ENCODE measurements at regions of chr6 and their contacts with region 1.

Region 1: DNA sequence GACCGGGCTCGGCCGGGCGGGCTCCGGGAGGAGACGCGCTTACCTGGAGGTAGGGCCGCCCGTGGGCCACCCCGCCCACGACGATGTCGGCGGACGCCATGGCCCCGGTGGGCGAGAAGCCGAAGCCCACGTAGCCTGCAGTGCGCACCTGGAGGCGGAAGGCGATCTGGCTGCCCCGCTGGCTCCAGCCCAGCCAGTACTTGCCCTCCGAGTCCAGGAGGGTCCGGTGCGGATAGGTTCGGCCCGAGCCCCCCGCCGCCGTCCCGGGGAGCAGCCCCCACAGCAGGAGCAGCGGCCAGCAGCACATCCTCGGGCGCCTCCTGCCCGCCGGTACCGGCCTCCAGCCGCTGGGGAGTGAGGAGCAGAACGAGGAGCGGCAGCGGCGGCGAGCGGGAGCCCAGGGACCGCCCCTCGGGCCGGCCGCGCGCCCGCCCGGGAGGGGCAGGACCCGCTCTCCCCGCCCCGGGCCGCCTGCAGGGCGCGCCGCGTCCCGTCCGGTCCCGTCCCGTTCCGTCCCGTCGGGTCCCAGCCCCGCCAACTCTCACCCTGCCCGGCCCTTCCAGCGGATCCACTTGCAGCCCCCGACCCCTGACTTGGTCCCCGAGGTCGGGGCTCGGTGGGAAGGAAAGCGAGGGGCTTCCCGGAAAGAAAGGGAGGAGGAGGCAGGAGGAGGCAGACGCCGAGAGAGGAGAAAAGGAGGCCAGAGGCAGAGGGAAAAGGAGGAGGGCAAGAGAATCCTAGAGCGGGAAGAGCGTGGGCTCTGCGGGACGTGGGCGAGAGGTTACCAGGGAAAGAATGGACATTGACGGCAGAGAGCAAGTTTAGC is at the start of gene MOXD1:
- DNase-seq: no peak
- ATAC-seq: peak; percentile 96
- H3K4me3 ChIP-seq: peak within 1 kb of the TSS; percentile 60 to 74 (median 62)
- H3K27ac ChIP-seq: no peak within 1 kb of the TSS
- H3K4me1 ChIP-seq: peaks cover 12% of the 10 kb centered on the region
- H3K27me3 ChIP-seq: peaks cover 14 to 38% of the 10 kb centered on the region in 2 experiments
- CTCF ChIP-seq: no peak; the same call in 1 of the 2 replicates
- EP300 ChIP-seq: no peak
- POLR2A ChIP-seq: no peak
- RAD21 ChIP-seq: no peak
- total RNA-seq, gene MOXD1: not detected in 2 replicates

Region 2: GRCh38 chr6:132430110-132430509 is 28.8 kb after region 1 on chr6:
- CTCF ChIA-PET with region 1: no interaction called
- POLR2A ChIA-PET with region 1: no interaction called
- in situ Hi-C with region 1: no loop called
- intact Hi-C with region 1: no loop called
- DNase-seq: no peak
- ATAC-seq: no peak
- H3K4me3 ChIP-seq: no peak overlapping the region
- H3K27ac ChIP-seq: no peak overlapping the region
- H3K4me1 ChIP-seq: no peaks in the 10 kb centered on the region
- H3K27me3 ChIP-seq: no peaks in the 10 kb centered on the region
- CTCF ChIP-seq: no peak
- EP300 ChIP-seq: no peak
- POLR2A ChIP-seq: no peak
- RAD21 ChIP-seq: no peak

Region 3: DNA sequence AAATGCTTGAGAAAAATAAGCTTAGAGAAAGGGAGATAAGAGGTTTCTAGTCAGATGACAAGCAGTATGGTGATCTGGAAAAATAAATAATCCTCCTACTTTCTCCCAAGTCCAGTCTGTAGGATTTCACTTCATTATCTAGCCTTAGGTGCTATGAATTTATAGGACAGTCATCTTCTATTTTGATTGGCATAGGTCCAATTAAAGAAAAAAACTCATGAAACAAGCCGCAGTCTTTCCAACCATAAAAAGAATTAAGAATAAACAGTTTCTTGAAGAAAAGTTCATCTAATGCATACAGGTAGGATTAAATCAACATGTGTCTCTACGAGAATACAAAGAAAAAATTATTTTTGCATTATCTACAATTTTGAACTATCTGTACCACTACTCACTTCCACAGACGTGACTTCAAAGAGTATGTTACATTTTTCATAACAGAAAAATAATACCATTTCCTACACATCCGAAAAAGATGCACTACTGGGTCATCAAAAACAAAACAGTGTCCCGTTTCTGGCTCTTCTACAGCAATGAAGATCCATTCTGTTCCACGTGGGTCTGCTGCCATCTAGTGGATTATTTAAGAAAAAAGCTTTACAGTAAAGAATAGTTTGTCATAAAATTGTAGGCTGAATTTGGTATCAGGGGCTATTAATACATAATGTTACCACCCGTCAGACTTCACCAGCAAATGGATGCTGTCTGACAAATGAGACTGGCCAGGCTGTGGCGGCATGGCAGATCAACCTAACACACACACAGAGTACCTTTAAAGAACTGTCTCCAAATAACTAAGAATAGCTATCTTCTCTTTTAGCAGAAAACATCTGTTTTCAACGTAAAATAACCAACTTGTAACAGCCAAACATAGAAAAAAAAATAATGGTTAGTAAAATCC is 82.7 kb after region 1 on chr6:
- CTCF ChIA-PET with region 1: no interaction called
- POLR2A ChIA-PET with region 1: no interaction called
- in situ Hi-C with region 1: no loop called
- intact Hi-C with region 1: loop called (anchors 5 kb)
- DNase-seq: peak; percentile 75
- ATAC-seq: peak; percentile 88
- H3K4me3 ChIP-seq: no peak overlapping the region
- H3K27ac ChIP-seq: no peak overlapping the region
- H3K4me1 ChIP-seq: no peaks in the 10 kb centered on the region
- H3K27me3 ChIP-seq: no peaks in the 10 kb centered on the region
- CTCF ChIP-seq: peak; percentile 83
- EP300 ChIP-seq: no peak
- POLR2A ChIP-seq: no peak
- RAD21 ChIP-seq: peak; percentile 85

Region 4: DNA sequence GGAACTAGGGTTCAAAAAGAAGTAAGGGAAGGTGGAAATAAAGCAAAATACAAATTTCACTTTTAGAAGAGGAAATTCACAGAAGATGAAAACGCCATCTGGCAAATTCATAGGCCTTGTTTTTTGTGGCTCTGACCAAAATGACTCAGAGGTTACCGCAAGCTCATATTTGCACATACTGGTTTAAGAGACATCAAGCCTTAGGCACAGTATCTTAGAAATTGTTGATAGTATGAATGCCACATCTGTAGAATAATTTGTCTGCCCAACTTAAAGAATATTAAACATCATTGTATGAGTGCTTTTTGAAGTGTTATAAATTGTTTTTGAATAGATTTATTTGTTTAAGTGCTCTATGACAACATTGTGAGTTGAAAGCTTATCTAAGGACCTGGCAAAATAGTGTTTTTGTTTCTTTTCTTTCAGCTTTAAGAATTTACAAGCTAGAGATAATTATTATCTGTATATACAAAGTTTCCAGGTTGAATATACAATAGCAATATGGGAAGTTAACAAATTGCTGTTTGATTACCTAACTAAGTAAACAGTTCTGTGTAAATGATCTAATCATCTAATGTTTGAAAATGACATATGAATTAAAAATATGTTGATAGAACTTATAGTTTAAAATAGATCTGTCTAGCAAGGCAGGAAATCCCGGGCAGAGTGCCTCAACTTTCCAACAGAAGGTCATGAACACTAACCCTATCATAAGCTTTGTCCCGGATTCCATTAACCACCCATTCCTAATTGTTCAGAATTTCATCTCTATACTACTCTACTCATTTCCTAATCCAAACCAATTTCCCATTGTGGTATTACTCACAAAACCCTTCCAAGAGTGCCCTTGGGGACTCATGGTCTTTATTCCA is 247.3 kb after region 1 on chr6:
- CTCF ChIA-PET with region 1: no interaction called
- POLR2A ChIA-PET with region 1: no interaction called
- in situ Hi-C with region 1: no loop called
- intact Hi-C with region 1: no loop called
- DNase-seq: no peak
- ATAC-seq: no peak
- H3K4me3 ChIP-seq: no peak overlapping the region
- H3K27ac ChIP-seq: no peak overlapping the region
- H3K4me1 ChIP-seq: no peaks in the 10 kb centered on the region
- H3K27me3 ChIP-seq: 0 out of 5 replicates have a peak, but pooled peaks cover 0 to 4% of the 10 kb centered on the region in 2 experiments
- CTCF ChIP-seq: no peak
- EP300 ChIP-seq: no peak
- POLR2A ChIP-seq: no peak
- RAD21 ChIP-seq: no peak

Measured in HepG2 (cell line).